Left lung (tissue), 14 donors: ENCODE measurements at regions of chr1 and their contacts with region 1.

Region 1: GRCh38 chr1:179882243-179883039 is at the start of gene TOR1AIP1:
- DNase-seq: peak; percentile 97 to 99 (median 98)
- ATAC-seq: peak; percentile 92
- H3K4me3 ChIP-seq: peak within 1 kb of the TSS; percentile 61 to 77
- H3K27ac ChIP-seq: peak within 1 kb of the TSS; percentile 98 to 100
- H3K4me1 ChIP-seq: peaks cover 21 to 62% of the 10 kb centered on the region in 2 donors
- H3K27me3 ChIP-seq: no peaks in the 10 kb centered on the region
- CTCF ChIP-seq: peak in 1 of 2 donors; percentile 81
- polyA plus RNA-seq, gene TOR1AIP1: 57.4 to 77.0 (median 68.0) TPM

Region 2: DNA sequence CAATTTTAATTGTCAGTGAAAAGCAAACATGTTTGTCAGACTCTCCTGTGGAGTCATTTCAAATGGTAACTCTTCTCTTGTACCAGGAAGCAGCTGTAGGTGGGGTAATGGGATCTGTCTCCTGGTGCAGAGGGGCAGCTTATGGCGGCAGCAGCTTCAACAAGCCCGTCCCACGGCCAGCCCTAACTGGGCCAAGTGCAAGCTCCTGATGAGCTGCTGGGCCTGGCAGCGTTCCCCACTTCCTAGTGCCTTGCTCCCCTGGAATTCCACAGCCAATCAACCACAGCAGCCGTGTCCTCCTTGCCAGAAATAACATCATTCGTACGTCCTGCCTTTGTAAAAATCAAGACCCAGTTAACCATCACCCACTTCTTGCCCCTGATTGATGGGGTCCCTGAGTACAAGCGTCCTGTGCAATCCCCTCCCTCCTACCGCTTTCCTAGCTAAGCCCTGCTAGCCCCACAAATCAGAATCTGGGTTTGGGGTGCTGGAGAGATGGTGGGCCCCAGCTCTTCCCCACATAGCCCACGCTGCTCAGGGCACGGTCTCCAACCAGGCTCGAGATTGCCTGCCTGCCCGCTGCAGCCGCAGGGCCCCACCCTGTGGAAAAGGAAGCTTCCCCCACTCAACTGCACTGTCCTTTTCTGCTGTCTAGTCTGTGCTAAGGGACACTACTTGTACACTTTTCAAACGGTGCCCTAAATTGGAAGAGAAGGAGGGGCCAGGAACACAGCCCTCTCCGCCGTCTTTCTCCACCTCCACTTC is 66.1 kb before region 1 on chr1:
- intact Hi-C with region 1: no loop called
- DNase-seq: peak in 2 of 4 donors; percentile 51 to 68
- ATAC-seq: no peak
- H3K4me3 ChIP-seq: no peak overlapping the region
- H3K27ac ChIP-seq: no peak overlapping the region
- H3K4me1 ChIP-seq: peaks cover 11 to 21% of the 10 kb centered on the region in 2 donors
- H3K27me3 ChIP-seq: peaks cover 0 to 18% of the 10 kb centered on the region in 2 donors
- CTCF ChIP-seq: no peak

Region 3: DNA sequence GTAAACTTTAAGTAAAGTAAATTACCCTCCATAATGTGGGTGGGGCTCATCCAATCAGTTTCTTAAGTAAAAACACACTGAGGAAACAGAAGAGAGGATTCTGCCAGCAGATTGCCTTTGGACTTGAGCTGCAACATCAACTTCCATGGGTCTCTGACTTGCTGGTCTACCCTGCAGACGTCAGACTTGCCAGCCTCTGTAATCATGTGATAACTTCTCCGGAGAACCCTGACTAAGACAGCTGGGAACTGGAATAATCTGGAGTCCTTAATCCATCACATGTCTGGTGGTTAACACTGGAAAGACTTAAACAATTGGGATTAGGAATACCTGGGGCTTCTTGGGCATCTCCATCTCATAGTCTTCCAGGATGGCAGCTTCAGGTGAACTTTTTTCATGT is 59.0 kb after region 1 on chr1:
- intact Hi-C with region 1: no loop called
- DNase-seq: no peak
- ATAC-seq: no peak
- H3K4me3 ChIP-seq: no peak overlapping the region
- H3K27ac ChIP-seq: no peak overlapping the region
- H3K4me1 ChIP-seq: no peaks in the 10 kb centered on the region
- H3K27me3 ChIP-seq: no peaks in the 10 kb centered on the region
- CTCF ChIP-seq: no peak

Region 4: DNA sequence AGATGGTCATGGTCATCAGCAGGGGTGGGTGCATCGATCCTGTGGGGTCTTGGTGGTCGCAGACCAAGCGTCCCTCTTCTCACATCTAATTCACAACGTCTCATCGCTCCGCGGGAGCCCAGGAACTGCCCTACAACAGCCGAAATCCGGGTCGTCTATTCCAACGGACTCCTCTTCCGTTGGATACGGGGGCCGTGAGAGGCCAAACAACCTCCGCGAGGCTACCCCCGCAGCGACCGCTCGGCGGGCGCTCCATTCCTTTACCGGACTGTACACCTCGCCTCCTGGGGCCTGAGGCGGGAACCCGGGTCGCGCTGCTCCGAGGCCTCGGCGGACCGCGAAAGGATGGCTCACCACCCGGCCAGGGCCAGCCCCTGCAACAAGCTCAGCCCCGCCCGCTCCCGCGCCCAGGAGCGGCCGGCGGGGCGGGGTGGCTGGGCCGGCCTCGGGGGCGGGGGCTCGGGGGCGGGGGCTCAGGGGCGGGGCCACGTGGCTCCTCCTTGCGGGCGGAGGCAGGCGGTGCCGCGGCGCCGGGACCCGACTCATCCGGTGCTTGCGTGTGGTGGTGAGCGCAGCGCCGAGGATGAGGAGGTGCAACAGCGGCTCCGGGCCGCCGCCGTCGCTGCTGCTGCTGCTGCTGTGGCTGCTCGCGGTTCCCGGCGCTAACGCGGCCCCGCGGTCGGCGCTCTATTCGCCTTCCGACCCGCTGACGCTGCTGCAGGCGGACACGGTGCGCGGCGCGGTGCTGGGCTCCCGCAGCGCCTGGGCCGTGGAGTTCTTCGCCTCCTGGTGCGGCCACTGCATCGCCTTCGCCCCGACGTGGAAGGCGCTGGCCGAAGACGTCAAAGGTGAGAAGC is 272.1 kb after region 1 on chr1 and contains the start of gene QSOX1:
- intact Hi-C with region 1: loop called in 1 of 2 experiments (anchors 10 kb)
- DNase-seq: peak; percentile 90 to 98 (median 93)
- ATAC-seq: peak; percentile 85
- H3K4me3 ChIP-seq: peak within 1 kb of the TSS; percentile 93 to 96
- H3K27ac ChIP-seq: peak within 1 kb of the TSS; percentile 88 to 95
- H3K4me1 ChIP-seq: peaks cover 16 to 67% of the 10 kb centered on the region in 2 donors
- H3K27me3 ChIP-seq: no peaks in the 10 kb centered on the region
- CTCF ChIP-seq: peak in 1 of 2 donors; percentile 40
- polyA plus RNA-seq, gene QSOX1: 145 to 201 (median 178) TPM